Endothelial cell of umbilical vein (primary cell): ENCODE measurements at regions of chr2 and their contacts with region 1.

Region 1: DNA sequence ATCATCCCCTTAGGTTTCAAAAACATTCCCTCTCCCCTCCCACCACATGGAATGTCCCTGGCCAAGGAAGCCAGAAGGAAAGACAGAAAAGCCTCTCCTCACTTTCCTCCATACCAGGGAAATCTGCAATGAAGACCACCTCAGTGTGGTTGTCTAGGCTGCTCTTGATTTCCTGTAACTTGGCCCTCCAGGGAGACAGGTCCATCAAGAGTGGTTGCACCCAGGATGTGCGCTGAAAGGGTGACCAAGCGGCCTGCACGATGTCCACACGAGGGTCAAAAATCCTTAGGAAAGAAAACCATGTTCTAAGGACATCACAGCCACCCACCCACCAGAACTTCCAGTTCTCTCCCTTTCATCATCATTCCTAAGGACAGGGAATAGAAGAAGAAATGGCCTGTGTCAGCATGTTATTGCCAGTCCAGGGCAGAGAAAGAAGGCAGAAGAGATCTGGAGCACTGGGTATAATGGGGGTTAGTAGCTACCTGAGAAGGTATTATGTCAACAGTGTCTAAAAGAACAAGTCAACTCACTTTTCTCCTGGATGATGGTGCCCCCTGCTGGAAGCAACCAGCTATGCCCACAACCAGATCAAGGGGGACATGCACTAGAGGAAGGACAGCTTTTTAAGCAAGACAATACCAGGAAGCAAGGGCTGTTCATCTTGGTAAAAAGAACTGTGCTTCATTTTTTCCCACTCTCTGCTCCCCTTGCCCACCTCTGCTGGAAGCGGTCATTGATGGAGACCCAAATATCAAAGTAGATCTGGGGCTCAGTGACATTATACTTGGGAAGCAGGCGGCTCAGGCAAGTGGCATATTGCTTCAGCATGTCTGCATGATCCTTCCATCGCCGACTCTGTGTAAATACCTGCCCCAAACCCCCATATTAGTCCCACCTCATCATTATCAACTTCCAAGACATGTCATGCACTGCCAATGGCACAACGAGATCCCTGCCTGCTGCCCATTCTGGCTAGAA is 9.3 kb downstream of the GGCX start:
- DNase-seq: peak; percentile 86
- H3K4me3 ChIP-seq: no peak overlapping the region
- H3K27ac ChIP-seq: no peak overlapping the region
- H3K4me1 ChIP-seq: peaks cover 17% of the 10 kb centered on the region
- H3K27me3 ChIP-seq: no peaks in the 10 kb centered on the region
- CTCF ChIP-seq: peak; percentile 82 to 94
- POLR2A ChIP-seq: no peak

Region 2: GRCh38 chr2:85327822-85328617 is 224.0 kb before region 1 on chr2 and contains the start of gene TGOLN2:
- CTCF ChIA-PET with region 1: interaction called, 5 read pairs
- POLR2A ChIA-PET with region 1: no interaction called
- dilution Hi-C with region 1: no loop called
- intact Hi-C with region 1: loop called (anchors 1 kb)
- DNase-seq: peak; percentile 91
- H3K4me3 ChIP-seq: peak within 1 kb of the TSS; percentile 80 to 94 (median 82)
- H3K27ac ChIP-seq: peak within 1 kb of the TSS; percentile 86
- H3K4me1 ChIP-seq: peaks cover 29% of the 10 kb centered on the region
- H3K27me3 ChIP-seq: no peaks in the 10 kb centered on the region
- CTCF ChIP-seq: no peak
- POLR2A ChIP-seq: peak; percentile 99
- total RNA-seq, gene TGOLN2: 119 and 140 TPM in 2 replicates

Region 3: GRCh38 chr2:85377083-85377482 is 174.9 kb before region 1 on chr2:
- CTCF ChIA-PET with region 1: no interaction called
- POLR2A ChIA-PET with region 1: no interaction called
- dilution Hi-C with region 1: no loop called
- intact Hi-C with region 1: no loop called
- DNase-seq: no peak
- H3K4me3 ChIP-seq: no peak overlapping the region
- H3K27ac ChIP-seq: no peak overlapping the region
- H3K4me1 ChIP-seq: no peaks in the 10 kb centered on the region
- H3K27me3 ChIP-seq: no peaks in the 10 kb centered on the region
- CTCF ChIP-seq: no peak
- POLR2A ChIP-seq: no peak

Region 4: DNA sequence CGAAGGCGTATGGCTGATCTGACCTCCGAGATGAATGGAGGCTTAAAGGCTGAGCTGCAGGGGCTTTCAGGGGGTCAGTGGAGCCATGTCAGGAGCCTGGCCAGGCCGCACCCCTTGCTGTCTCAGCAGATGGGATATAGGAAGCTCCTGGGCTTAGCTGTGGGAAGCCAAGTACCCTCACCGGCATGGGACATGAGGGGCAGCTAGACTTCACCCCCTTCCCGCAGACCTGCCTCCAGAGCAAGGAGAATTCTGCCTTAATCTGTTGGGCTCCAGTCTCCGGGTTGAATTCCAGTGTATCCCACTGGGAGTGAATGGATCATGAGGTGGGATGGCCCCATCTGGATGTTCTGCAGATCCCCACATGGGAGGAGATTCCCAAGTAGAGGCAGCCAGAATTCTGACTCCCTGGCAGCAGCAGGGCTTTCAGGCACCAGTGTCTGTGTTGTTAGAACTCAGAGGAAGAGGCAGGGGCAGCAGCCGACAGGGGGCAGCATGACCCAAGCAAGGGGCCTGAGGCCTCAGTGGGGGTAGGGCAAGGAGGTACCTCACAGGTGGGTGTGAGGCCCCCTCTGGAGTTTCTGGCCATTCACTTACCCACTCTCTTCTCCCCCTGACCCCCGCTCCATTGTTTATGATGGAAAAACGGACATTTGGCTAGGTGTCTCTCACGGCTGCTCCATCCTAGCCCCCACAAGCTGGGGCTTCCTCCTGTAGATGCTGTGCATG is 160.9 kb before region 1 on chr2:
- CTCF ChIA-PET with region 1: interaction called, 99 read pairs
- POLR2A ChIA-PET with region 1: no interaction called
- dilution Hi-C with region 1: no loop called
- intact Hi-C with region 1: loop called (anchors 1 kb)
- DNase-seq: peak; percentile 38
- H3K4me3 ChIP-seq: no peak overlapping the region
- H3K27ac ChIP-seq: no peak overlapping the region
- H3K4me1 ChIP-seq: no peaks in the 10 kb centered on the region
- H3K27me3 ChIP-seq: no peaks in the 10 kb centered on the region
- CTCF ChIP-seq: peak; percentile 64 to 80
- POLR2A ChIP-seq: no peak

Region 5: GRCh38 chr2:85430752-85431569 is 121.0 kb before region 1 on chr2:
- CTCF ChIA-PET with region 1: interaction called, 19 read pairs
- POLR2A ChIA-PET with region 1: no interaction called
- dilution Hi-C with region 1: no loop called
- intact Hi-C with region 1: no loop called
- DNase-seq: no peak
- H3K4me3 ChIP-seq: no peak overlapping the region
- H3K27ac ChIP-seq: no peak overlapping the region
- H3K4me1 ChIP-seq: no peaks in the 10 kb centered on the region
- H3K27me3 ChIP-seq: no peaks in the 10 kb centered on the region
- CTCF ChIP-seq: no peak
- POLR2A ChIP-seq: no peak

Region 6: DNA sequence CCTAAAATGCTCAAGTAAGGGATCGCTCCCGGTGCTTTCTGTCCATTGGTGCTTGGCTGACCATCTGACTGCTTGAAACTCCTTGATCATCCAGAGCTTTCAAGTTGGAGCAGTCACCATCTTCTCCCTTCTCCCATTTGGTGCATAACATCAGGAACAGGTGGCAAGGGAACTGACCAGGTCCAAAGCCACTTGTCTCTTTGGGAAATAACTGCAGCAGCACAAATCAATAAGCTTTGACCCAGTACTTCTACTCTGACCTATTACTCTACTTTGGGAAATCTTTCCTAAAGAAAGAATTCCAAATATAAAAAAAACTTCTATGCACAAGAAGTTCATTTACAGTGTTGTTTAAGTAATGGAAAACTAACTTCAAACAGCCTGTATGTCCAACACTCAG is 23.6 kb before region 1 on chr2:
- CTCF ChIA-PET with region 1: no interaction called
- POLR2A ChIA-PET with region 1: no interaction called
- dilution Hi-C with region 1: no loop called
- intact Hi-C with region 1: no loop called
- DNase-seq: no peak
- H3K4me3 ChIP-seq: no peak overlapping the region
- H3K27ac ChIP-seq: no peak overlapping the region
- H3K4me1 ChIP-seq: no peaks in the 10 kb centered on the region
- H3K27me3 ChIP-seq: peaks cover 7% of the 10 kb centered on the region in 2 experiments
- CTCF ChIP-seq: no peak
- POLR2A ChIP-seq: no peak

Region 7: DNA sequence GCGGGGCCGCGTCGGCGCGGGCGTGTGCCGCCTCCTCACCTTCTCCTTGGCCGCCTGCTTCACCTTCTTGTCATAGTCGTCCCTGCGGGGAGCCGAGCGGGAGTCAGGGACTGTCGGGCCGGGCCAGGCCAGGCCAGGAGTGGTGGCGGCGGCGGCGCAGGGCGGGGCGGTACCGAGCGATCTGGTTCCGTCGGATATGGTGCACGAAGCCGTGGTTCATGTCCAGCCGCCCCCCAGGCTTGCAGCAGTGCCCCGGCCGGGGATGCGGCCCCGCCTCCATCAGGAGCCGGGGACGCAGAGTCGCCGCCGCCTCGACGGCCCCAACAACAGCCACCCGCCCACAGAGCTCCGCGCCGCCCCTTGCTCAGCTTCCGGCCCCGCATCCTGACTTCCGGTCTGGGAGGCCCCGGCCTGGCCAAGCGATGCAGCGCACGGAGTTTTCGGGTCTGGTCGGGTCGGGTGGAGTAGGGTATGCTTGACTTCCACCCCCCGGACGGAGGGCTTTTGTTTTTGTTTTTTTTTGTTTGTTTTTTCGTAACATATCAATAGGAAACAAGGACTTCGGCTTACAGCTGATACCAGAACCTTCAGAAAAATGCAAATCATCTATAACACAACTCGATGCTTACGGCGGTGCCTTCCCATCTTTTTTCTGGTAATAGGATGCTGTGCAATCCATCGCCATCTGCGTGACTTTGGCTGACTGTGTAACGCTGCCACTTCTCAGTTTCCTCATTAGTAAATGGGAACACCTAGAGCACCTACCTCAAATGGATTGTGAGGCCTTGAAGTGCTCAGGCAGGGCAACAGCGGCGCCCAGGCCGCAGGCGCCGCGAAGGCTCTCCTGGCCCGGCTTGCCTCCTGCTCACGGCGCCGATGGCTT is 60.0 kb after region 1 on chr2 and contains the start of gene C2orf68:
- CTCF ChIA-PET with region 1: interaction called, 4 read pairs
- POLR2A ChIA-PET with region 1: interaction called, 6 read pairs
- dilution Hi-C with region 1: no loop called
- intact Hi-C with region 1: loop called (anchors 2 kb)
- DNase-seq: peak; percentile 79
- H3K4me3 ChIP-seq: peak within 1 kb of the TSS; percentile 77 to 98 (median 91)
- H3K27ac ChIP-seq: peak within 1 kb of the TSS; percentile 61
- H3K4me1 ChIP-seq: peaks cover 14% of the 10 kb centered on the region
- H3K27me3 ChIP-seq: no peaks in the 10 kb centered on the region
- CTCF ChIP-seq: no peak
- POLR2A ChIP-seq: peak; percentile 93
- total RNA-seq, gene C2orf68: 23.0 and 27.4 TPM in 2 replicates

Region 8: GRCh38 chr2:86087936-86088850 is 536.2 kb after region 1 on chr2:
- CTCF ChIA-PET with region 1: no interaction called
- POLR2A ChIA-PET with region 1: no interaction called
- dilution Hi-C with region 1: no loop called
- intact Hi-C with region 1: no loop called
- DNase-seq: no peak
- H3K4me3 ChIP-seq: no peak overlapping the region
- H3K27ac ChIP-seq: no peak overlapping the region
- H3K4me1 ChIP-seq: no peaks in the 10 kb centered on the region
- H3K27me3 ChIP-seq: no peaks in the 10 kb centered on the region
- CTCF ChIP-seq: peak; percentile 37 to 38
- POLR2A ChIP-seq: no peak